GM10248 (cell line): ENCODE measurements at regions of chr11 and their contacts with region 1.

Region 1: DNA sequence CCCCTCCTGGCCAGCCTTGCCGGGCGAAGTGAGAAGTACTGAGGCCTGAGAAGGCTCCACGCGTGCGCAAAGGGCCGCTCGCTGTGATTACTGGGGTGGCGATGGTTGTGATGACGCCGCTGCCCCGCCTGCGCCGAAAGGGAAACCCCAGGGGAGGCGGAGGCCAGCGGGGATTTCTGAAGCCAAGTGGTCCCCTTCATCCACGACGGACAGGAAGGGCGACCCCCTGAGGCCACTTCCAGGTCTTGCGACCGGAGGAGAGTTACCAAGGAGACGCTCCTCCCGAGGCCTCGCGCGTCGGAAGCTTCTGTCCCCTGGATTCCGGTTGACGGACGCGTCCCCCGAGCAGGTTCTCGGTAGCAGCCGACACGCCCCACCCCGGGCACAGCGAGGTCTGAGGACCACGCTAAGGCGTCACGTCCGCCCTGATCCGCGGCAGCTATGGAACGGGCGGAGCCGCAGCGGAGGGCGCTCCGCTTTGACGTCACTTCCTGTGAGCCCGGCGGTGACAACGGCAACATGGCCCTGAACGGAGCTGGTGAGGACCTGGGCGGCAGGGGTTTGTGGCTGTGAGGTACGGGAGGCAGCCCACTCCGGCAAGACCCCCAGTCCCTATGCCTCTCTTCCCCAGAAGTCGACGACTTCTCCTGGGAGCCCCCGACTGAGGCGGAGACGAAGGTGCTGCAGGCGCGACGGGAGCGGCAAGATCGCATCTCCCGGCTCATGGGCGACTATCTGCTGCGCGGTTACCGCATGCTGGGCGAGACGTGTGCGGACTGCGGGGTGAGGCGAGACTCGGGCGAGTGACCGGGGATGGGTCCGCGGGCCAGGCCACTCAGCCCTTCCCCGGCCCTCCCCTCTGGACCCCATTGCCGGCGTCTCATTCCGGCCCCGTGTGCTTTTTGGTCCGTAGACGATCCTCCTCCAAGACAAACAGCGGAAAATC is at the start of gene ZNRD2:
- DNase-seq: peak; percentile 96
- CTCF ChIP-seq: peak; percentile 69

Region 2: DNA sequence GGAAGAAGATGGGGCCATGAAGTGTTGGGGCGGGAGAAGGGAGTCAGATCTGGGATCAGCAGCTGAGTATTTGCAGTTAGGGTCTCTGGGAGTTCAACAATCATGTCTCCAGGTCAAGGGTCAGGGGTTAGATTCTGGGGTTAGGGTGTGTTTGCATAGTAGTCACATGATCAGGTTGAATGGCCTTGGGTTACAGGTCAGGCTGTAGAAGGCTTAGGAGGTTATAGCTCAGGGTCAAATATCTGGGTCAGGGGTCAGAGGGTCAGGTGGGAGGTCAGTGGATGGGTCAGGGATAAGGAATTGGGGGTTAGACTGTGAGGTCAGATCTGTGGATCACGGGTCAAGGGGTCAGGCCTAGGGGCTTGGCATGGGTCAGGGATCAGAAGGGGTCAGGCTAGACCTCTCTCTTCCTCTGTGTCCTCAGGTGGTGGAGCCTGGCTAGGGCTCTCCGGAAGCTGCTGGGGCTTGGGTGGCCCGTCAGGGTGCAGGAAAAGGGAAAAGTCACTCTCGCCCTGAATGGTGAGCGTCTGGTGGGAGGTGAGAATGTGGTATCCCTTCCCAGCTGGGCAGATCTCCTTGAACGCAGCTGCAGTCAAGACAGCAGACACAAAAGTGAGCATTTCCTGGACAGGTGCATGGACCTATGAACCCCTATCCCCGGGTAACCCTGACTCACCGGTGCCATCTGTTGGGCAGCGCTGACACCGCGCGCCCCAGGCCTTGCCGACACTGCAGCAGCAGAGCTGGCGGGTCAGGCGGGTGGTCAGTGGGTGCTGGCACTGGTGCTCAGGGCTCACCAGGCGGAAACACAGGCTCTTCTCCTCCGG is 18.5 kb before region 1 on chr11:
- CTCF ChIA-PET with region 1: interaction called, 16 read pairs
- POLR2A ChIA-PET with region 1: no interaction called
- DNase-seq: peak; percentile 75
- CTCF ChIP-seq: peak; percentile 84

Region 3: GRCh38 chr11:65558002-65558931 is 12.0 kb before region 1 on chr11 and contains the start of gene LTBP3:
- CTCF ChIA-PET with region 1: interaction called, 24 read pairs
- POLR2A ChIA-PET with region 1: no interaction called
- DNase-seq: peak; percentile 72
- CTCF ChIP-seq: no peak

Region 4: DNA sequence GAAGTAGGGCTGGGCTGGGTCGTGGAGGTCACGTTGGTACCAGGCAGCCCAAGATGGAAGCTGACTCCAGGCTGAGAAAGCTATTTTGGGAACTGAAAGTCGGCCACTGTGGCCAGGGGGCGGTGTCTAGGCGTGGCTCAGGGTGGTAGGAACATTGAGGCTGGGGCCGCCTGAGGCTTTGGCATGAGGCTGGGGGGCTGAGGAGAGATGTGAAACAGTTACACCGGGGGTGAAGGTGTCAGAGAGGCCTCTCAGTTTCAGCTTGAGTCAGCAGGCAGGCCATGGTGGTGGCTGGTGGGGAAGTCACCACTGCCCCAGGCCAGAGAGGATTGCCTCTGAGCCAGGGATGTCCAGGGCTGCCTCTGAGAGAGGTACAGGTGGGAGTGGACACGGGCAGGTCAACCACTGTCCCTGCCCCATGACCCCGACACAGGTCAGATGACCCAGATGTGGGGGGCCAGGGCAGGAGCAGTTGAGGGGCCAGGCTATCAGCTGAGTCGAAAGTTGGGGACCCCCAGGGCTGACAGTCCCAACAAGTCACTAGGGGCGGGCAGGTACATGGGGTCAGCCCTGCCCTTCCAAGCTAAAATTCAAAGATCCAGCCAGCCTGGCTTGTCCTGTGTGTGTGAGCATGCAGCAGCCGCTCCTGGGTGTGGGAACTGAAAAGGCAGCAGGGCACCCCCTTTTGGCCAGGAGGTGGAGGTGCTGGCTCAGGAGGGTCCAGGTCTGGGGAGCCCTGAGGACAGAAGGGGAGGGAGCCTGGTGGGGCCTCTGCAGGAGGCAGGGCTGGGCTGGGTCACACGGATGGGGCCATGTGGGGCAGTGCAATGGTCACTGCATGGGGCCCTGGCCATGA is 18.2 kb after region 1 on chr11:
- CTCF ChIA-PET with region 1: interaction called, 351 read pairs
- POLR2A ChIA-PET with region 1: interaction called, 5 read pairs
- DNase-seq: peak; percentile 95
- CTCF ChIP-seq: peak; percentile 72

Region 5: DNA sequence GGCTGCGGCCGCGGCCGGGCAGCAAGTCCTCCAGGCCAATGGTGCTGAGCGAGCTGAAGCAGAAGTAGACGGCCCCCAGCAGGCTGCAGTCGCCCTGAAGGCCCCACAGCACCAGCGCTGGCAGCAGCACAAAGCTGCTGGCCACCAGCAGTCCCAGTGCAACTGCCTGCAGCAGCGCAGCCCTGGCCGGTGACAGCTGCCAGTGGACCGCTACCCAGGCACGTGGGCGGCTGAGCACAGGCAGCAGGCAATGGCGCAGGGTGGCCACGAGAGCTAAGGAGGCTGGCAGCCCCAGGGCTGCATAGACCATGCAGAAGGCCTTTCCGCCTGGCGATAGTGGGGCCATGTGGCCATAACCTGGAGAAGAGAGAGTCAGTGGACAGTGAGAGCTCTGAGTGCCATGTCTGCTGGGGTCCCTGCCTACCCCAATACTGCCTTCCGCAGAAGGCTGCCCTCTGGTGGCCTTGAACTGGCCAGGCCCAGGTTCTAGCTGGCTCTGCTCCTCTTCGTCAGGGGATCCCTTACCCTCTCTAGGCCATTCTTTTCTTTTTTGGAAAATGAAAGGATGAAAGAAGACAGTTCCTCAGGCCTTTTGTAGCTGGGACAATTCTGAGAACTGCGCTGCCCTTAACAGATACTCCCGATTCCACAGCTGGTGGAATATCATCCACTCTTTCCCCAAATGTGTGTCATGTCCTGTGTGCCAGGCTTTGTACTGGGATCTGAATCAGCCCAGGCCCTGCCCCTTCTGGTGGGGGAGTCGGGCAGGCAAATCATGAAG is 23.5 kb after region 1 on chr11:
- CTCF ChIA-PET with region 1: interaction called, 351 read pairs
- POLR2A ChIA-PET with region 1: interaction called, 5 read pairs
- DNase-seq: peak; percentile 70
- CTCF ChIP-seq: peak; percentile 76

Region 6: GRCh38 chr11:65615229-65615941 is 45.1 kb after region 1 on chr11 and contains the start of gene PCNX3:
- CTCF ChIA-PET with region 1: interaction called, 351 read pairs
- POLR2A ChIA-PET with region 1: interaction called, 4 read pairs
- DNase-seq: peak; percentile 100
- CTCF ChIP-seq: no peak

Region 7: GRCh38 chr11:65662799-65663638 is 92.8 kb after region 1 on chr11 and contains the start of gene RELA:
- CTCF ChIA-PET with region 1: no interaction called
- POLR2A ChIA-PET with region 1: no interaction called
- DNase-seq: peak; percentile 95
- CTCF ChIP-seq: no peak

Region 8: DNA sequence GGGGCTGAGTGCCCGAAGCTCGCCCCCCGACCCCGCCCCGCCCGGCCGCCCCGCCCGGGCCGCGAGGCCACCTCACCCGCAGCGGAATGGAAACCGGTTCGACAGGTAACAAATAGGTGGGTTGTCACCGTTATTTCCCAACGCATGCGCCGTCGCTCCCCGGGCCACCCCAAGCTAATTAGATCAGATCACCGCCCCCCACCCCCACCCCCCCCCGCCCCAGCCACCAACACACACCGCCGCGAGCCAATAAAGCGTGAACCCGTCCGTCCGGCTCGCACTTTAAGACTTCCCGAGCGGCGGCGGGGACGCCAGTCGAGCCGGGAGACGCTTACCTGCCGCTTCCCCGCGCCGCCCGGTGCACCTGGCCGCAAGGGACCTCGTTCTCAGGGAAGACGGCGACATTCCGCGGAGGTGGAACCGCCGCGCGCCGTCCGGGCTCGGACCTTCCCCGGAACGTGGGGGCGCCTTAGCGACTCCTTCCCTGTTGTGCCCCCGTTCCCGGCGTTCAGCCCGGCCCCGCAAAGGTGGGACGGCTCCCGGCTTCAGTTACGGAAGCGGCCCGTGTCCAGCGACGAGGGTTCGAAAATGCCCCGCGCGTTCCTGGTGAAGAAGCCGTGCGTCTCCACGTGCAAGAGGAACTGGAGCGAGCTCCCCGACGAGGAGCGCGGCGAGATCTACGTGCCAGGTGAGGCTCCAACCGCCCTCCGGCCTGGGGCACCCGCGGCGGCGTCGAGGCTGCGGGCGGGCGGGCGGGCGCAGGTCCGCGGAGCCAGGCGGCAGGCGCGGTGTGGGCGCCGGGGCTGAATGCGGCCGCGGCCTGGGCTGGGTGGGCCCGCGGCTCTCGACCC is 216.8 kb after region 1 on chr11 and contains the start of gene OVOL1:
- CTCF ChIA-PET with region 1: no interaction called
- POLR2A ChIA-PET with region 1: no interaction called
- DNase-seq: peak; percentile 35
- CTCF ChIP-seq: no peak